Dorsolateral prefrontal cortex (tissue), 120 donors: ENCODE measurements at regions of chr16 and their contacts with region 1.

Region 1: DNA sequence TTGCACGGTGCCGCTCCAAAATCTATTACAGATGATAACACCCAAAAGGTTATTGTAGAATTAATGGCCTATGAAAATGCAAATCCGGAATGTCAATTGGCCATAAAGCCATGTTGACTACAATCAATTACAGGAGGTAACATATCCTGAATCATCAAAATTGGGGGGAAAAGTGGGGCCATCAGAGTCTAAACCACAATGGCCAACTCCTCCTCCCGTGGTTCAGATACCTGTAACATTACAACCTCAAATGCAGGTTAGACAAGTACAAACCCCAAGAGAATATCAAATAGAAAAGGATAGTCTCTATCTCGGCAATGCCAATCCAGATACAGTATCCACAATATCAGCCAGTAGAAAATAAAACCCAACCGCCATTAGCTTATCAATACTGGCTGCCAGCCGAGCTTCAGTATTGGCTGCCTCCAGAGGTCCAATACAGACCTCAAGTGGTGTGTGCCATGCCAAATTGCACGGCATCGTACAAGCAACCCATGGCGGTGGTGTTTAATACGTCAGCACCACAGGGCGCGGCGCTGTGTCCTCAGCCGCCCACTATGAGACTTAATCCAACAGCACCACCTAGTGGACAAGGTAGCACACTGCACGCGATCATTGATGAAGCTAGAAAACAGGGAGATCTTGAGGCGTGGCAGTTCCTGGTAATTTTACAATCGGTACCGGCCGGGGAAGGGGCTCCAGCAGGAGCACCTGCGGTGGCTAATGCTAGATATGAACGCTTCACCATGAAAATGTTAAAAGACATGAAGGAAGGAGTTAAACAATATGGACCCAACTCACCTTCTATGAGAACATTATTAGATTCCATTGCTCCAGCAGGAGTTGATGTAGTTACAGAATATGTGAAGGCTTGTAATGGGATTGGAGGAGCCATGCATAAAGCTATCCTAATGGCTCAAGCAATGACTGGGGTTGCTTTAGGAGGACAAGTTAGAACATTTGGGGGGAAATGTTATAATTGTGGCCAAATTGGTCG is 15.2 kb downstream of the FLYWCH1 start:
- DNase-seq: peak; percentile 79 to 93 (median 86)
- H3K4me3 ChIP-seq: peak overlapping the region in 50 of 59 donors; percentile 15 to 64 (median 40)
- H3K27ac ChIP-seq: peak overlapping the region in 22 of 59 donors; percentile 0 to 76 (median 44)
- H3K27me3 ChIP-seq: no peaks in the 10 kb centered on the region
- CTCF ChIP-seq: peak; percentile 91 to 100 (median 98)

Region 2: DNA sequence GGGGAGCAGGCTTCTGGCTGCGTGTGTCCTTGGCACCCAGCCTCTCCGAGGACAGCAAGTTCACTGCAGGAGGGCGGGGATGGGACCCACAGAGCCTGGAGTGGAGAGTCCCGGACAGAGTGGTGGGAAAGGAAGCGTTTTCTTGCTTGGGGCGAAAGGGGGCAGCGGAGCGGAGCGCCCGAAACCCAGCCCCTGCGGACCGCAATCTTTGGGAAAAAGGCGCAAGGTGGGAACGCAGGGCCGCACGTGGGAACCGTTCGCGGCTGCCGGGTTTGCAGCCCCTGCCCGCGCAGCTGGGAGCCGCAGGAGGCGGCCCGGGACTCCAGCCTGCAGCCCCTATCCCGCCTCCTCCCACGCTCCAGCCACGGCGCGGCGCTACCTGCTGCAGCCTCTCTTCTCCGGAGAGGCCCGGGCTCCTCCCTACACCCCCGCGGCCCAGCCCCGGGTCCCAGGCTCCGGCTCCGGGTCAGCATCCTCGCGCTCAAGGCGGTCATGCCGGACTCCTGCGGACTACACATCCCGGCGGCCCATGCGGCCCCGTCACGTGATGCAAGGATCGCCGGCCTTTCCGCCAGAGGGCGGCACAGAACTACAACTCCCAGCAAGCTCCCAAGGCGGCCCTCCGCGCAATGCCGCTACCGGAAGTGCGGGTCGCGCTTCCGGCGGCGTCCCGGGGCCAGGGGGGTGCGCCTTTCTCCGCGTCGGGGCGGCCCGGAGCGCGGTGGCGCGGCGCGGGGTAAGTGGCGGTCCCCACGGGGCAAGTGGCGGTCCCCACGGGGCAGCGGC is 879.4 kb before region 1 on chr16 and contains the starts of genes NTHL1 and TSC2:
- intact Hi-C with region 1: loop called in 1 of 2 experiments (anchors 5 kb)
- DNase-seq: peak; percentile 97 to 99 (median 98)
- H3K4me3 ChIP-seq: peak within 1 kb of the TSS; percentile 62 to 100 (median 93)
- H3K27ac ChIP-seq: peak within 1 kb of the TSS in 56 of 59 donors; percentile 5 to 87 (median 72)
- H3K27me3 ChIP-seq: no peaks in the 10 kb centered on the region
- CTCF ChIP-seq: peak; percentile 25 to 93 (median 78)
- total RNA-seq, gene NTHL1: 12.2 to 41.4 (median 26.0) TPM
- total RNA-seq, gene TSC2: 129 to 311 (median 193) TPM

Region 3: GRCh38 chr16:2854700-2855309 is 72.1 kb before region 1 on chr16:
- intact Hi-C with region 1: no loop called
- DNase-seq: no peak
- H3K4me3 ChIP-seq: no peak overlapping the region
- H3K27ac ChIP-seq: no peak overlapping the region
- H3K27me3 ChIP-seq: peaks cover 0 to 60% (median 34%) of the 10 kb centered on the region in 45 donors
- CTCF ChIP-seq: peak in 21 of 56 donors; percentile 10 to 52 (median 19)

Region 4: DNA sequence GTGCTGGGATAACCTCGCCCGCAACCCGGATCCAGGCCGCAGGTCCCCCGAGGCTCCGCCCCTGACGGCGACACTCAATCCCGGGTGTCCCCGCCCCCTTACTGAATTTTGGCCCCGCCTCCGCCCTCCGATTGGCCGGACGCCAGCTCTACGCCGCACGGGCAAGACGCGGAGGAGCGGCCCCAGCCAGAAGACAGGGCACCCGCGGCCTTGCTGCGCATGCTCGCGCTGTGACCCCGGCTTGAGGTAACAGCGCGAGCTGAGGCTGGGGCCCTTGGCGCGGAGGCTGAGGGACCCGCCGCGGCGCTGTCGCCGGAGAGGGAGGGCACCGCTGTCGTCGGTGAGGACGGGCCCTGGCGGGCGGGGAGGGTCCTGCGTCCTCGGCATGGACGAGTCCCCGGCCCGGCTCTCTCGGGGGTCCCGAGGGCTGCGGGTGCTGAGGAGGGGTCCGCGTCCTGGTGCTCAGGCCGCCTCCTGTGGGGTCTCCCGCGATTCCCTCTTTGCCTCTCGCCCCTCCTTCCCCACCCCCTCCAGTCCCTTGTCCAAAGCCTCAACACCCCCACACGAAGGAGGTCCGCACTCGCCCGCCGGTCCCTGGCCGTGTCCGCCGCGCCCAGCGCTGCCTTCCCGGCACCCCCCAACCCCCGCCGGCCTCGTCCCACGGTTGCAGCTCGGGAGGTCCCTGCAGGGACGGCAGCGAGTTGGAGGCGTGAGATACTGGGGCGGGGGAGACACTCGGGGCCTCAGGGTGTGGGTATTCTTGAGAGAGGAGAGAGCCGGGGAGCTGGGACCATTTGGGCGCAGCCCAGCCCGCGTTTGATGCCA is 43.7 kb before region 1 on chr16 and contains the start of gene FLYWCH2:
- intact Hi-C with region 1: loop called in 1 of 2 experiments (anchors 5 kb)
- DNase-seq: peak; percentile 96 to 100 (median 98)
- H3K4me3 ChIP-seq: peak within 1 kb of the TSS; percentile 60 to 99 (median 93)
- H3K27ac ChIP-seq: peak within 1 kb of the TSS; percentile 17 to 97 (median 91)
- H3K27me3 ChIP-seq: no peaks in the 10 kb centered on the region
- CTCF ChIP-seq: peak in 33 of 56 donors; percentile 0 to 51 (median 25)
- total RNA-seq, gene FLYWCH2: 19.4 to 46.0 (median 31.2) TPM

Region 5: GRCh38 chr16:2980227-2981086 is 53.5 kb after region 1 on chr16 and contains the start of gene PKMYT1:
- intact Hi-C with region 1: loop called in 1 of 2 experiments (anchors 5 kb)
- DNase-seq: peak; percentile 76 to 97 (median 85)
- H3K4me3 ChIP-seq: peak within 1 kb of the TSS; percentile 44 to 100 (median 84)
- H3K27ac ChIP-seq: peak within 1 kb of the TSS in 52 of 59 donors; percentile 26 to 92 (median 80)
- H3K27me3 ChIP-seq: peaks cover 0 to 6% (median 0%) of the 10 kb centered on the region in 45 donors
- CTCF ChIP-seq: peak in 35 of 56 donors; percentile 6 to 61 (median 33)
- total RNA-seq, gene PKMYT1: 2.7 to 18.6 (median 8.3) TPM

Region 6: GRCh38 chr16:2992383-2993055 is 65.6 kb after region 1 on chr16:
- intact Hi-C with region 1: no loop called
- DNase-seq: no peak
- H3K4me3 ChIP-seq: no peak overlapping the region
- H3K27ac ChIP-seq: no peak overlapping the region
- H3K27me3 ChIP-seq: peaks cover 0 to 4% (median 0%) of the 10 kb centered on the region in 45 donors
- CTCF ChIP-seq: no peak